Activated CD4-positive, alpha-beta T cell treated with anti-CD3 and anti-CD28 coated beads, Interleukin-2, amount 10 ng/mL, durations not matched to agents 24 days and 14 days (primary cell): ENCODE measurements at regions of chr7 and their contacts with region 1.

Region 1: GRCh38 chr7:2821161-2821841 is 22.8 kb downstream of the GNA12 start:
- DNase-seq: no peak
- H3K4me3 Mint-ChIP-seq: no peak overlapping the region
- H3K27ac Mint-ChIP-seq: no peak overlapping the region
- H3K4me1 Mint-ChIP-seq: peaks cover 36% of the 10 kb centered on the region
- H3K27me3 Mint-ChIP-seq: no peaks in the 10 kb centered on the region

Region 2: GRCh38 chr7:2785071-2785500 is 36.2 kb before region 1 on chr7:
- intact Hi-C with region 1: loop called (anchors 5 kb)
- DNase-seq: no peak
- H3K4me3 Mint-ChIP-seq: no peak overlapping the region
- H3K27ac Mint-ChIP-seq: no peak overlapping the region
- H3K4me1 Mint-ChIP-seq: peaks cover 29% of the 10 kb centered on the region
- H3K27me3 Mint-ChIP-seq: no peaks in the 10 kb centered on the region

Region 3: GRCh38 chr7:2800931-2801688 is 20.2 kb before region 1 on chr7:
- intact Hi-C with region 1: no loop called
- DNase-seq: no peak
- H3K4me3 Mint-ChIP-seq: no peak overlapping the region
- H3K27ac Mint-ChIP-seq: no peak overlapping the region
- H3K4me1 Mint-ChIP-seq: peaks cover 27% of the 10 kb centered on the region
- H3K27me3 Mint-ChIP-seq: no peaks in the 10 kb centered on the region